CD4-positive, alpha-beta memory T cell (primary cell): ENCODE measurements at regions of chr2 and their contacts with region 1.

Region 1: GRCh38 chr2:69565431-69565839 is 78.1 kb downstream of the AAK1 start:
- DNase-seq: peak; percentile 36 to 67 (median 48)
- H3K4me3 ChIP-seq: no peak overlapping the region
- H3K4me3 Mint-ChIP-seq: peak overlapping the region; percentile 52 to 79 (median 70)
- H3K27ac ChIP-seq: peak overlapping the region; percentile 11
- H3K27ac Mint-ChIP-seq: peak overlapping the region; percentile 57 to 90 (median 80)
- H3K4me1 ChIP-seq: peaks cover 96% of the 10 kb centered on the region
- H3K4me1 Mint-ChIP-seq: peaks cover 70 to 99% (median 84%) of the 10 kb centered on the region in 4 donors
- H3K27me3 ChIP-seq: no peaks in the 10 kb centered on the region
- H3K27me3 Mint-ChIP-seq: no peaks in the 10 kb centered on the region

Region 2: DNA sequence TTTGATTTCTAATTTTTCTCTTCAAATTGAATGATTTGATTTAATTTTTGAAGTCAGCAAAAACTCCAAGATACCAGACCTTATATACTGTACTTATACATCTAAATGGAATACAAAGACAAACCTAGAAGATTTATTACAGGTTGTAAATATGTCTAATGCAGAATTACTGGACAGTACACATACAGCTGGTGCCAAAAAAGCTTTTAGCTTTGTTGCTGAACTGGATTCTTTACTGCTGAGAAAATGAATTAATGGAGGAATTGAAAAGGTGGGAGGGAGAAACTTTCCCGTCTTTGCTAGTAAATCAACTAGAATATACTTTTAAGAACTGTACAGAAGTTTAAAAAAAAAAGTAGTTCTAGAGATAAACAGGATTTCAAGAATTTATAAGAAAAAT is 1520.1 kb before region 1 on chr2:
- CTCF ChIA-PET with region 1: no interaction called
- POLR2A ChIA-PET with region 1: no interaction called
- intact Hi-C with region 1: no loop called
- DNase-seq: no peak
- H3K4me3 ChIP-seq: no peak overlapping the region
- H3K4me3 Mint-ChIP-seq: no peak overlapping the region
- H3K27ac ChIP-seq: no peak overlapping the region
- H3K27ac Mint-ChIP-seq: no peak overlapping the region
- H3K4me1 ChIP-seq: peaks cover 4% of the 10 kb centered on the region
- H3K4me1 Mint-ChIP-seq: peaks cover 4 to 8% (median 6%) of the 10 kb centered on the region in 4 donors
- H3K27me3 ChIP-seq: no peaks in the 10 kb centered on the region
- H3K27me3 Mint-ChIP-seq: no peaks in the 10 kb centered on the region

Region 3: DNA sequence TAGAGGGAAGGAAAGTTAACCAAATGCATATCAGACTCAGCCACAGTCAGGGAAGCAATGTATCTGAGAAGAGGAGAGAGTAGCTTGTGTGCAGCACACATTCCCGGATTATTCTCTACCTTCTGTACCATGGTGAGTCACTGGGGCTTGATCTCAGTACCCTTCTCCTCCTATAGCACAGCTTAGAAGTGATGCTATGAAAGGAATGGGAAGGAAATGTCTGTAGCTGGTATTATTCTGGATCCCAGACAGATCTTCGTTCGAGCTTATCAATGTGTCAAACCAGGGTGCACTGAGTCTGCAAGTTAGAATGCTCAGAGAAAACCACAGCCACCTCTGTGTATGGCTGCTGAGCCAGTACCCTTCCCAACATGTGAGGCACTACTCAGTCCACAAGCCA is 40.2 kb before region 1 on chr2:
- CTCF ChIA-PET with region 1: interaction called, 16 read pairs
- POLR2A ChIA-PET with region 1: no interaction called
- intact Hi-C with region 1: no loop called
- DNase-seq: no peak
- H3K4me3 ChIP-seq: no peak overlapping the region
- H3K4me3 Mint-ChIP-seq: no peak overlapping the region
- H3K27ac ChIP-seq: no peak overlapping the region
- H3K27ac Mint-ChIP-seq: peak overlapping the region in 4 of 7 donors; percentile 5 to 55 (median 33)
- H3K4me1 ChIP-seq: no peaks in the 10 kb centered on the region
- H3K4me1 Mint-ChIP-seq: peaks cover 0 to 3% (median 0%) of the 10 kb centered on the region in 4 donors
- H3K27me3 ChIP-seq: no peaks in the 10 kb centered on the region
- H3K27me3 Mint-ChIP-seq: no peaks in the 10 kb centered on the region

Region 4: GRCh38 chr2:69581774-69582581 is 16.5 kb after region 1 on chr2:
- CTCF ChIA-PET with region 1: interaction called, 220 read pairs
- POLR2A ChIA-PET with region 1: interaction called, 5 read pairs
- intact Hi-C with region 1: no loop called
- DNase-seq: no peak
- H3K4me3 ChIP-seq: no peak overlapping the region
- H3K4me3 Mint-ChIP-seq: peak overlapping the region in 7 of 8 donors; percentile 51 to 81 (median 70)
- H3K27ac ChIP-seq: no peak overlapping the region
- H3K27ac Mint-ChIP-seq: peak overlapping the region; percentile 42 to 92 (median 86)
- H3K4me1 ChIP-seq: peaks cover 98% of the 10 kb centered on the region
- H3K4me1 Mint-ChIP-seq: peaks cover 80 to 95% (median 88%) of the 10 kb centered on the region in 4 donors
- H3K27me3 ChIP-seq: no peaks in the 10 kb centered on the region
- H3K27me3 Mint-ChIP-seq: no peaks in the 10 kb centered on the region

Region 5: DNA sequence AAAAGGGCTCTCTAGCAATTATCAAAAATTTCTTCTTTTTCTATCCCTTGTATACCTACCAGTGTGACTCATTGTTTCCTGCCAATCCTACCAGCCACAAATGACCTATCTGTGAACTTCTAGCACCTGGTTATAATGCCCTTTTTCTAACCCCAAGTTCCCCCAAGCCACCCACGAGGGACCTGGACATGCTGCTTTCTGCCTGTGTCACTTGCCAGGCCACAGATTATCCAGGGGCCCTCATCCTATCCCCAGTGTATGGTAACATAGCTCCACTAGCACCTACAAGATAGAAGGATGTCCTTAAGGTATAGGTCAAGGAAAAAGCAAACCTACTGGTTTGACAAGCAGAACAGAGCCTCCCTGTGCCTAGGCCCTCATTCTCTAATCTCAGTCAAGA is 51.3 kb after region 1 on chr2:
- CTCF ChIA-PET with region 1: interaction called, 58 read pairs
- POLR2A ChIA-PET with region 1: interaction called, 6 read pairs
- intact Hi-C with region 1: no loop called
- DNase-seq: peak; percentile 24 to 87 (median 36)
- H3K4me3 ChIP-seq: no peak overlapping the region
- H3K4me3 Mint-ChIP-seq: peak overlapping the region in 6 of 8 donors; percentile 51 to 79 (median 72)
- H3K27ac ChIP-seq: peak overlapping the region; percentile 20
- H3K27ac Mint-ChIP-seq: peak overlapping the region in 3 of 7 donors; percentile 67 to 93 (median 88)
- H3K4me1 ChIP-seq: peaks cover 99% of the 10 kb centered on the region
- H3K4me1 Mint-ChIP-seq: peaks cover 2 to 43% (median 39%) of the 10 kb centered on the region in 4 donors
- H3K27me3 ChIP-seq: no peaks in the 10 kb centered on the region
- H3K27me3 Mint-ChIP-seq: no peaks in the 10 kb centered on the region

Region 6: GRCh38 chr2:69643602-69644505 is 78.4 kb after region 1 on chr2 and contains the start of gene AAK1:
- CTCF ChIA-PET with region 1: interaction called, 79 read pairs
- POLR2A ChIA-PET with region 1: interaction called, 39 read pairs
- intact Hi-C with region 1: loop called (anchors 2 kb)
- DNase-seq: peak; percentile 82 to 90 (median 85)
- H3K4me3 ChIP-seq: peak within 1 kb of the TSS; percentile 91 to 95
- H3K4me3 Mint-ChIP-seq: peak within 1 kb of the TSS; percentile 92 to 99 (median 98)
- H3K27ac ChIP-seq: peak within 1 kb of the TSS; percentile 80
- H3K27ac Mint-ChIP-seq: peak within 1 kb of the TSS; percentile 95 to 99 (median 97)
- H3K4me1 ChIP-seq: peaks cover 68% of the 10 kb centered on the region
- H3K4me1 Mint-ChIP-seq: peaks cover 51 to 71% (median 60%) of the 10 kb centered on the region in 4 donors
- H3K27me3 ChIP-seq: no peaks in the 10 kb centered on the region
- H3K27me3 Mint-ChIP-seq: no peaks in the 10 kb centered on the region
- total RNA-seq, gene AAK1: 220 to 225 TPM

Region 7: DNA sequence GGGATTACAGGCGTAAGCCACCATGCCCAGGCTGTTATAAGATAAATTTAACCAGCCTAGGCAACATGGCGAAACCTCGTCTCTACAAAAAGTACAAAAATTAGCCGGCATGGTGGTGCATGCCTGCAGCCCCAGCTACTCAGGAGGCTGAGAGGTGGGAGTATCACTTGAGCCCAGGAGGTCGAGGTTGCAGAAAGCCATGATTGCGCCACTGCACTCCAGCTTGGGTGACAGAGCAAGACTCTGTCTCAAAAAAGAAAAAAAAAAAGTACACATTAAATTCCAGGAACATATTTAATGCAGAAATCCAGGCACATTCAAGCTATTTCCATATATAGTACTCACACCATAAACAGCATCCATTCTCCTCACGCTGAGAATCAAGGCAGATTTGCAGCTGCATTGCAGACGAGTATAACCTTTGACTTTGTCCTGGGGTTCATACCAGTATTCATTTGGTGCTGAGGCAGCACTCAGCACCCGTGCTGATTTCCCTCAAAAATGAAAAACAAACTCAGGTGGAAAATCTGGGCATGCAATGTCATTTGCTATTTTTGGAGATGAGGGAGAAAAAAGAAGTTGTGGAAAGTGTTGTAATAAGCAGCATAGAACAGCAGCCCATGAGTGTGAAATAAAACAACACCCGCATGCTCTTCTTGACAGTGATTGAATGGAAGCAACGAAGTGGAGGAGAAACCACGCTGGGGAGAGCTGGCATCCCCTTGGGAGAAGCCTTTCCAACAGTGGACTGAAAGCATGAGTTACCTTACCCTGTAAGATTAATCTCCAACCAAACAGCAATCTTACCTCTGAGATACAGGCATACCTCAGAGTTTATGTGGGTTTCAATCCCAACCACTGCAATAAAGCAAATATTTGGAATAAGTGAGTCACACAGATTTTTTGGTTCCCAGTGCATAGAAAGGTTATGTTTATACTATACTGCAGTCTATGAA is 129.7 kb after region 1 on chr2:
- CTCF ChIA-PET with region 1: interaction called, 15 read pairs
- POLR2A ChIA-PET with region 1: interaction called, 3 read pairs
- intact Hi-C with region 1: no loop called
- DNase-seq: no peak
- H3K4me3 ChIP-seq: no peak overlapping the region
- H3K4me3 Mint-ChIP-seq: peak overlapping the region in 6 of 8 donors; percentile 5 to 75 (median 61)
- H3K27ac ChIP-seq: no peak overlapping the region
- H3K27ac Mint-ChIP-seq: peak overlapping the region; percentile 47 to 97 (median 77)
- H3K4me1 ChIP-seq: peaks cover 88% of the 10 kb centered on the region
- H3K4me1 Mint-ChIP-seq: peaks cover 70 to 95% (median 80%) of the 10 kb centered on the region in 4 donors
- H3K27me3 ChIP-seq: no peaks in the 10 kb centered on the region
- H3K27me3 Mint-ChIP-seq: no peaks in the 10 kb centered on the region

Region 8: GRCh38 chr2:69816923-69817542 is 251.6 kb after region 1 on chr2:
- CTCF ChIA-PET with region 1: interaction called, 23 read pairs
- POLR2A ChIA-PET with region 1: no interaction called
- intact Hi-C with region 1: no loop called
- DNase-seq: peak; percentile 76 to 86 (median 80)
- H3K4me3 ChIP-seq: no peak overlapping the region
- H3K4me3 Mint-ChIP-seq: no peak overlapping the region
- H3K27ac ChIP-seq: no peak overlapping the region
- H3K27ac Mint-ChIP-seq: no peak overlapping the region
- H3K4me1 ChIP-seq: peaks cover 7% of the 10 kb centered on the region
- H3K4me1 Mint-ChIP-seq: peaks cover 3 to 5% (median 4%) of the 10 kb centered on the region in 4 donors
- H3K27me3 ChIP-seq: no peaks in the 10 kb centered on the region
- H3K27me3 Mint-ChIP-seq: no peaks in the 10 kb centered on the region